ENCODE measurements at regions of chr10 and their contacts with region 1.

Region 1: DNA sequence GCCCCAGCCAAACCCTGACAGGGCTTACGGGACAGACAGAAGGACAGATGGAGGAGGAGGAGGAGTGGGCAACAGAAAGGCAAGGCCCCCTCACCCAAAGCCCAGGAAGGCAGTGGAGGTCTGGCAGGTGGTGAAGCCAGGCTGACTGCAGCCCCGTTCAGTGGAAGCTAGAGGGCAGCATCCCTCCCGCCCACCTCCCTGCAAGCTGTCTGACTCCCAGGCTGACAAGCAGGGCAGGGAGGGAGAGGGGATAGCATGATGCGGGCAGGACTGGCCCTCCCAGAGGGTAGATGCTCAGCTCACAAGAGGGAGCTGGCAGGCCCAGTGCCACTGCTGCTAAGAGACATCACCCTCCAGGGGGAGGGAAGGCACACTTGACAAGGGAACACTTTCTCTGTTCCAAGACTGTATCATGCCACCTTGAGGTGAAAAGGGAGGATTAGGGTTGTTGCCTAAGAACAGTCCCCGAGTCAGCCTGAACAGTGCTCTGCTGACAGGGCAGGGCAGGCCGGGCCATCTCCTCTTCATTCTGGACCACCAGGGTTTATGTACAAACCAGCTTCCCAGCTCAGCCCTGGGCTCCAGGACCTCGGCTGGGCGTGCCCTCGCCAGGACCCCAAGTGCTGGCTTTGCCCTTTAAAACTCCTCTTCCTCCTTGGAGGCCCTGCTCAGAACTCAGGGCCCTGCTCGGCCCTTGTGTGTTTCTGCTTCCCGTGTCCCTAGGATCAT is 61.8 kb downstream of the RASGEF1A start:
- DNase-seq: peak in 1 of 2 experiments; percentile 74
- H3K4me3 ChIP-seq: no peak overlapping the region
- H3K27ac ChIP-seq: no peak overlapping the region
- H3K4me1 ChIP-seq: peaks cover 0 to 10% (median 4%) of the 10 kb centered on the region in 4 experiments; a peak in 5 of 7 replicates
- H3K27me3 ChIP-seq: no peaks in the 10 kb centered on the region
- CTCF ChIP-seq: peak in 2 of 3 experiments; percentile 90 to 92; a peak in 3 of 4 replicates
- EP300 ChIP-seq: no peak
- POLR2A ChIP-seq: no peak
- RAD21 ChIP-seq: peak; percentile 65 to 79

Region 2: DNA sequence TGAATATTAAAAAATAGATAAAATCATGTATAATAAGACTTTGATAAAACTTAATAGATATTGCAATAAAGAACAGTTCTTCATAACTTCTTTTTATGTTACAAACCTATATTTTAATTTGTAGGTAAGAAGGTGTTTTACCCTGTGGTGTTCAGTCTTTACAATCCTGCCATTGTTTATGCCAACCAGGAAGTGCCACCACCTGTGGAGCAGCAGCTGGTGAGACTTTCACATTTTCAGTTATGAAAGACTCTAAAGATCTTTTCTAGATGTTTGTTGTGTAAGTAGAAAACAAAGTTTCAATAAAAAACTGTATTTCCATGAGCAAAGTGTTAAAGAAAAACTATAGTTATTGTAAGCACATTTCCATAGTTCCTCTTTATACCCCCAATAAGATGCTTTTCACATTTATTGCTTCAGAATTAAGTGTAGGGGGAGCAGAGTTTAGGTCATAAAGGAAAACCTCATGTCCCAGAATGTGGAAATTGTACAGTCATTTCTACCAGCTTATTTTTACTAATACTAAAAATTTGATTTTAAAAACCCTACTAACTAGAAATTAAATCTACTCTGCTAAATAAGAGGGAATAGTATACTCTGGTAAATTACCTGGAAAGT is 38.1 kb before region 1 on chr10:
- CTCF ChIA-PET with region 1: interaction called, 86 read pairs
- POLR2A ChIA-PET with region 1: interaction called, 5 read pairs
- DNase-seq: no peak
- H3K4me3 ChIP-seq: no peak overlapping the region
- H3K27ac ChIP-seq: no peak overlapping the region
- H3K4me1 ChIP-seq: no peaks in the 10 kb centered on the region; a peak in 1 of 7 replicates
- H3K27me3 ChIP-seq: no peaks in the 10 kb centered on the region
- CTCF ChIP-seq: no peak
- EP300 ChIP-seq: no peak
- POLR2A ChIP-seq: no peak
- RAD21 ChIP-seq: no peak

Region 3: GRCh38 chr10:43221419-43222209 is 16.5 kb after region 1 on chr10:
- CTCF ChIA-PET with region 1: interaction called, 159 read pairs
- POLR2A ChIA-PET with region 1: no interaction called
- DNase-seq: peak in 1 of 2 experiments; percentile 76
- H3K4me3 ChIP-seq: no peak overlapping the region
- H3K27ac ChIP-seq: no peak overlapping the region
- H3K4me1 ChIP-seq: peaks cover 0 to 6% (median 2%) of the 10 kb centered on the region in 4 experiments; a peak in 4 of 7 replicates
- H3K27me3 ChIP-seq: no peaks in the 10 kb centered on the region
- CTCF ChIP-seq: peak; percentile 73 to 78 (median 75)
- EP300 ChIP-seq: no peak
- POLR2A ChIP-seq: no peak
- RAD21 ChIP-seq: peak; percentile 48 to 62

Region 4: GRCh38 chr10:43234471-43235041 is 29.4 kb after region 1 on chr10:
- CTCF ChIA-PET with region 1: interaction called, 24 read pairs
- POLR2A ChIA-PET with region 1: interaction called, 4 read pairs
- DNase-seq: no peak
- H3K4me3 ChIP-seq: no peak overlapping the region
- H3K27ac ChIP-seq: no peak overlapping the region
- H3K4me1 ChIP-seq: peaks cover 0 to 8% (median under 1%) of the 10 kb centered on the region in 4 experiments; a peak in 3 of 7 replicates
- H3K27me3 ChIP-seq: peaks cover 7 to 21% (median 18%) of the 10 kb centered on the region in 4 experiments
- CTCF ChIP-seq: no peak
- EP300 ChIP-seq: no peak
- POLR2A ChIP-seq: no peak
- RAD21 ChIP-seq: no peak

Region 5: DNA sequence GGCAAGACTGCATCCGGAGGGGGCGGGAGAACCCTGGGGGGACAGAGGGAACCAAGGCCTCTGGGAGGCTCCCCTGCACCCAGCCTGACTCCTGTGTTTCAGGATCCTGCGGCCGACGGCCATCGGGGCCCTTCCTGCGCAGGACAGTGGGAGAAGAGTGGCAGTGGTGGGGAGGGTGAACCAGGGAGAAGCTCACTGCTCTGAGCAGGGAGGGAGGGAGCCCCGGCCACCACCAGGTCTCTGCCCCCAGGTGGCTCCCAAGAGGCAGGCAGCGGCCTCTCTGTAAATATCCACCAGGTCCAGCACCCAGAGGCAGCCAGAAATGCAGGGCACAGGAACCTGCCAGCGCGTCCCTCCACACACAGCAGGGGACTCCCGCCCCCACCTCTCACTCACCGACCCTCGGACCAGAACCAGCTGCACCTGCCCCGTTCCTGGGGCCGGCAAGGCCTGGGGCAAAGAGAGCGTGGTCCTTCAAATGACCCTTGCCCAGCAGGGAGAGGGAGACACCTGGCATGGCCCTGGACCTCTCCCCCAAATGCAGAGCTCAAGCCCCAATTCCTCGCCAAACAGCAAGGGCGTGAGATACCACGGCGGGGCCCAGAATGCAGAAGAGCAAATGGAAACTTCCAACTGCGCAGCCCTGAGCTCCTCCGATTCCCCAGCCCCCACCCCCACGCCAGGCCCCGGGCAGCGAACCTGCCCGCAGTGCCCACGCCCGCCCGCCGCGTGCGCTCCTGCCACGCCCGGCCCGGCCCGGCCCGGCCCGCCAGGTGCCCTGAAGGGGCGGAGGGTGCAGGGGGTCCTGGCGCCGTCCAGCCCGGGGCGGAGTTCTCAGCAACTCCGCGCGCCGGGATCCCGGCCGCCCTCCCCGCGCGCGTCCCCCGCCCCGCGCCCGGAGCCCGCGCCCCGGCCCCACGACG is 61.0 kb after region 1 on chr10:
- CTCF ChIA-PET with region 1: interaction called, 16 read pairs
- POLR2A ChIA-PET with region 1: no interaction called
- DNase-seq: peak in 1 of 2 experiments; percentile 60
- H3K4me3 ChIP-seq: peak overlapping the region; percentile 31 to 59 (median 42)
- H3K27ac ChIP-seq: no peak overlapping the region
- H3K4me1 ChIP-seq: peaks cover 0 to 12% (median 4%) of the 10 kb centered on the region in 4 experiments; a peak in 5 of 7 replicates
- H3K27me3 ChIP-seq: peaks cover 19 to 36% (median 35%) of the 10 kb centered on the region in 4 experiments
- CTCF ChIP-seq: peak in 2 of 3 experiments; percentile 57 to 59; a peak in 3 of 4 replicates
- EP300 ChIP-seq: no peak
- POLR2A ChIP-seq: no peak
- RAD21 ChIP-seq: peak; percentile 45 to 57; a peak in 3 of 4 replicates